Activated naive CD4-positive, alpha-beta T cell treated with anti-CD3 and anti-CD28 coated beads for 36 hours (primary cell): ENCODE measurements at regions of chr2 and their contacts with region 1.

Region 1: DNA sequence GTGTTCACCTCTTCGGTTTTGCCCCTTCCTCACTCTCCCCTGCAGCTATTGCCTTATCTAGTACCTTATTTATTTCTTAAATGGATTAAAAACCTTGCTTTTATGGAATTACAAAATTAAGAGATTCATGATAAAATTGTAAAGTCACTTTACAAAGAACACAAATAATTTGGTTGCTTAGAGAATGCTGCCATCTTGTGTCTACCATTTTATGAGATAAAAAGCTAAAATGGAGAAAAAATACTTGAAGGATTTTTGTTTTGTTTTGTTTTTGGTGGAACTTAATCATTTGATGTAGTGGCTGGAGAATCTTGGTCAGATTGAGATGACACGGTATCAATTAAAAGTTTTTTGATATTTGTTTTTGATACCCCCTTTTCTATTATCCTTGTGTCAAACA is 69.6 kb downstream of the R3HDM1 start:
- DNase-seq: no peak
- H3K4me3 Mint-ChIP-seq: no peak overlapping the region
- H3K27ac Mint-ChIP-seq: no peak overlapping the region
- H3K4me1 Mint-ChIP-seq: no peaks in the 10 kb centered on the region
- H3K27me3 Mint-ChIP-seq: no peaks in the 10 kb centered on the region

Region 2: DNA sequence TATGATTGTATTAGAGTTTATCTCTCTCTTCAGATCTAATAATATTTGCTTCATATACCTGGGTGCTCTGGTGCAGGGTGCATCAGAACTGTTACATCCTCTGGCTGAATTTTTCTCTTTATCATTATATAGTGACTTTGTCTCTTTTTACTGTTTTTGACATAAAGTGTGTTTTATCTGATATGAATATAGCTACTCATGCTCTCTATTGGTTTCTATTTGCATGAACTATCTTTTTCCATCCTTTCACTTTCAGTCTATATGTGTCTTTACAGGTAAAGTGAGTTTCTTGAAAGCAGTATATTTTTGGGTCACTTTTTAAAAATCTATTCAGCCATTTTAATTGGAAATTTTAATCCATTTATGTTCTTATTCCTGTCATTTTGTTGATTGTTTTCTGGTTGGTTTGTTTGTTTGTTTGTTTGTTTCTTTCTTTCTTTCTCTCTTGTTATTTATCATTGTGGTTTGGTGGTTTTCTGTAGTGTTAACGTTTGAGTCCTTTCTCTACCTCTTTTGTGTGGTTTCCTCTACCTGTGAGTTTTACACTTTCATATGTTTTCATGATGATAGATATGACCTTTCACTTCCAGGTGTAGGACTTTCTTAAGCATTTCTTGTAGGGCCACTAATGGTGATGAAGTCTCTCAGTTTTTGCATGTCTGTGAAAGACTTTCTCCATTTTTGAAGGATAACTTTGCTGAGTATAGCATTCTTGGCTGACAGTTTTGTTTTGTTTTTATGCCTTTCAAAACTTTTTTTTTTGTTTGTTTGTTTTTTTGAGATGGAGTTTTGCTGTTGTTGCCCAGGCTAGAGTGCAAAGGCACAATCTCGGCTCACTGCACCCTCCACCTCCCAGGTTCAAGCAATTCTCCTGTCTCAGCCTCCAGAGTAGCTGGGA is 627.4 kb before region 1 on chr2:
- CTCF ChIA-PET with region 1: interaction called, 10 read pairs
- intact Hi-C with region 1: no loop called
- DNase-seq: no peak
- H3K4me3 Mint-ChIP-seq: no peak overlapping the region
- H3K27ac Mint-ChIP-seq: peak overlapping the region; percentile 6
- H3K4me1 Mint-ChIP-seq: peaks cover 15% of the 10 kb centered on the region
- H3K27me3 Mint-ChIP-seq: peaks cover 3% of the 10 kb centered on the region

Region 3: DNA sequence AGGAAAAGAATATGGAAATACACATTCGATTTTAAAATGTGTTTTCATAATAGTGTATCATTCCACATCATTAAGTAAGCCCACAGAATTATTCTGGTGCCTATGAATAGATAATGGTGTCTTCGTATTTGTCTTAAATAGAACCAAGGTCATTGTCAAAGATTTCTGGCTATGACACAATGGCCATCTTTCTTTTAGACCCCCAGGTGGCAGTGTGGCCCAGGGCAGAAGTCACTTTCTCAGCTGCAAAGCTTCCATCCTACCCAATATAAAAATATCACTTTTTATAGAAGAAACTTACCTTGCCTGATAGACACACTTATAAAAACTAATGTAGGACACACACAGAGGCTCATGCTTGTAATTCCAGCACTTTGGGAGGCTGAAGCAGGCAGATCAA is 127.3 kb before region 1 on chr2:
- CTCF ChIA-PET with region 1: no interaction called
- intact Hi-C with region 1: loop called (anchors 2 kb)
- DNase-seq: peak; percentile 40
- H3K4me3 Mint-ChIP-seq: no peak overlapping the region
- H3K27ac Mint-ChIP-seq: no peak overlapping the region
- H3K4me1 Mint-ChIP-seq: peaks cover 2% of the 10 kb centered on the region
- H3K27me3 Mint-ChIP-seq: no peaks in the 10 kb centered on the region

Region 4: DNA sequence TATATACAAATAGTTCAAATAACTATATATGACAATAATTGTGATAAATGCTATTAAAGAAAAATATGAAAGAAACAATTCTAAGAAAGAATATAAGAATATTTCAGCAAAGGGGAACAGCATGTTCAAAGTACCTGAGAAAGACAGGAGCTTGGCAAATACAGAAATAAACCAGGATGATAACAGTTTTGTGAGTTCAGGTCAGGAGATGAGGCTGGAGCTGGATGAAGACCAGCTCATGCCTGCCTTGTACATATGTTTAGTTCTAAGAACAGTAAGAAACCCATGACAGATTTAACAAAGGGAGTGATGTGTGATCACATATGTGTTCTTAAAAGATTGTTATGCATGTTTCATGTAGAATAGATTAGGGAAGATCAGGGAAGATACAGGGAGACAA is 28.6 kb after region 1 on chr2:
- CTCF ChIA-PET with region 1: no interaction called
- intact Hi-C with region 1: no loop called
- DNase-seq: no peak
- H3K4me3 Mint-ChIP-seq: no peak overlapping the region
- H3K27ac Mint-ChIP-seq: no peak overlapping the region
- H3K4me1 Mint-ChIP-seq: no peaks in the 10 kb centered on the region
- H3K27me3 Mint-ChIP-seq: no peaks in the 10 kb centered on the region

Region 5: GRCh38 chr2:136628490-136628889 is 1027.6 kb after region 1 on chr2:
- CTCF ChIA-PET with region 1: no interaction called
- intact Hi-C with region 1: no loop called
- DNase-seq: no peak
- H3K4me3 Mint-ChIP-seq: no peak overlapping the region
- H3K27ac Mint-ChIP-seq: no peak overlapping the region
- H3K4me1 Mint-ChIP-seq: no peaks in the 10 kb centered on the region
- H3K27me3 Mint-ChIP-seq: no peaks in the 10 kb centered on the region